ENCODE measurements at regions of chr3 and their contacts with region 1.

Region 1: DNA sequence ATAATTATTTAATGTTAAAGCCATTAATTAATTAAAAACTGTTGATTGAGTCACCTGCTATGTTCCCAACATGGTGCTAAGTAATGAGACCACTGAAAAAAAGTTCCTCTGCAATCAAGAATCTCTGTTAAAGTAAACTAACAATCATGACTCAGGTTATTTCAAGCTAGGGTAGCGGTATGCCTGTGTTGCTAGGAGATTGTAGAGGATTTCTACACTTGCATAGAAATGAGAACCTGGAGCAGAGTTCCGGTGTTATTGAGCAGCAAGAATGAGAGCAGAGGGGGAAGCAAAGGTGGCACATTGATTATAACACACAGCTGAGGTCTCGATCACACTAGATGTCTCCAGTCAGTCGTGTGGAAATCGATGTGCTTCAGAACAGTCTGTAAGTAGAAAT is 41.4 kb downstream of the C3orf85 start:
- DNase-seq: no peak
- ATAC-seq: no peak
- H3K4me3 ChIP-seq: no peak overlapping the region
- H3K4me3 Mint-ChIP-seq: no peak overlapping the region
- H3K27ac ChIP-seq: no peak overlapping the region
- H3K27ac Mint-ChIP-seq: no peak overlapping the region
- H3K4me1 ChIP-seq: no peaks in the 10 kb centered on the region
- H3K4me1 Mint-ChIP-seq: no peaks in the 10 kb centered on the region
- H3K27me3 ChIP-seq: peaks cover 0 to 4% of the 10 kb centered on the region in 2 experiments
- H3K27me3 Mint-ChIP-seq: peaks cover 12% of the 10 kb centered on the region
- CTCF ChIP-seq: no peak

Region 2: GRCh38 chr3:109125902-109126301 is 52.0 kb before region 1 on chr3:
- CTCF ChIA-PET with region 1: no interaction called
- POLR2A ChIA-PET with region 1: no interaction called
- intact Hi-C with region 1: no loop called
- DNase-seq: no peak
- ATAC-seq: no peak
- H3K4me3 ChIP-seq: no peak overlapping the region
- H3K4me3 Mint-ChIP-seq: no peak overlapping the region
- H3K27ac ChIP-seq: no peak overlapping the region
- H3K27ac Mint-ChIP-seq: no peak overlapping the region
- H3K4me1 ChIP-seq: no peaks in the 10 kb centered on the region
- H3K4me1 Mint-ChIP-seq: no peaks in the 10 kb centered on the region
- H3K27me3 ChIP-seq: no peaks in the 10 kb centered on the region
- H3K27me3 Mint-ChIP-seq: peaks cover 6% of the 10 kb centered on the region
- CTCF ChIP-seq: no peak

Region 3: DNA sequence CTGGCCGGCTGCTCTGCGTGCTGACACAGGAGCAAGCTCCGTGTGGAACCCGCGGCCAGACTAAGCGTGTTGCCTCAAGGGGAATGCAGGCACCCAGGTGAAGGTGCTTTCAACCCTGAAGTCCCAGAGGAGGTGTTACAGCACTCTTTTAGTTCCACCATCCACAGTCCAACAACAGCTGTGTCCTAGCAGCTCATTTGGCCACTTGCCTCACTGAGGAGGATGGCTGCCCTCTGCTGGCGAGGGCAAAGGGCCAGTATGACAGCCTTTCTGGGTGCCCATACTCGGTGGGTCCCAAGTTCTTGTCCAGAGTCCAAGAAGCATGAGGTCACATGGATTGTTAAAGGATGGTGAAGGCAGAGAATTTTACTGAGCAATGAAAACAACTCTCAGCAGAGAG is 46.4 kb after region 1 on chr3:
- CTCF ChIA-PET with region 1: no interaction called
- POLR2A ChIA-PET with region 1: no interaction called
- intact Hi-C with region 1: loop called in 1 of 2 experiments (anchors 5 kb)
- DNase-seq: peak in 1 of 14 experiments; percentile 12
- ATAC-seq: no peak
- H3K4me3 ChIP-seq: no peak overlapping the region
- H3K4me3 Mint-ChIP-seq: no peak overlapping the region
- H3K27ac ChIP-seq: no peak overlapping the region
- H3K27ac Mint-ChIP-seq: no peak overlapping the region
- H3K4me1 ChIP-seq: no peaks in the 10 kb centered on the region
- H3K4me1 Mint-ChIP-seq: no peaks in the 10 kb centered on the region
- H3K27me3 ChIP-seq: no peaks in the 10 kb centered on the region
- H3K27me3 Mint-ChIP-seq: peaks cover 7% of the 10 kb centered on the region
- CTCF ChIP-seq: no peak

Measured in CD4-positive, alpha-beta T cell (primary cell).